ENCODE measurements at regions of chr14 and their contacts with region 1.

Region 1: DNA sequence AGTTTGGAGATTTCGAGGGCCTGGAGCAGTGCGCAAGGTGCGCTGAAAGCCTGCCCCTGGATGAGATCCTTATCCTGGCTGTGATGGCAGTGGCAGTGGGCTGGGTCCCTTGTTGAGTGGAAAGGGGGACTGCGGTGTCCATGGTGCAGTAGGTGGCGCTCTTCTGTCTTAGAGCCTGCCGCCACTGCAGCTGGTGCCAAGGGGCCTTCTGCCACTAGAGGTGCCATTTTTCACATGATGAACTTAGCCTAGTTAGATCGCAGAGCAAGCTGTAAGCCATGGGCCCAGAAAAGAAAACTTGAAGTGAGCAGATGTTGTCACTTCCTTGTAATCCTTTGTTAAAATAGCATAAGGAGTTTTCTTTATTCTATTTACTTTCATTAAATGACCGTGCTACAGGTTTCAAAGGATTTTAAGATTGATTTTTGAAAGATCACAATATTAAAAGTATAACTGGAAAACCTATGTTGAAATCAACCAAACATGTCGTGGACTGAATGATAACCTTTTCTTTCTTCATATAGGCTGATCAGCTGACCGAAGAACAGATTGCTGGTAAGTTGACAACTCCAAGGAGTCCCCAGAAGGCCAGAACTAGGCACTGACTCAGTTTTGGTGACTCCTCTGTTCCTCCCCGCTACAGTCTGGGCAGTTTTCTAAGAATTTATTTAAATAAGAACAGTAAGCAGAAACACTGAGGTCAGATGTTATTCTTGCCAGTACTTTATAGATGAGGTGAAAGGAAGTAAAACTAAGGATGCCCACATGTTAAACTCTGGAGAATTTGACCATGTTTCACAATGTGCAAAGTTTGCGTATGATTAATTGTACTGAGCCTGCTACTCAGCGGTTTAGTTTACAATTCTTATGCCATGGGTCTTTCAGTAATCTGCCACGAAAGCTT is 3.0 kb downstream of the CALM1 start:
- DNase-seq: peak; percentile 71
- H3K4me3 ChIP-seq: peak overlapping the region; percentile 85 to 94 (median 88)
- H3K27ac ChIP-seq: peak overlapping the region; percentile 95 to 99 (median 96)
- H3K4me1 ChIP-seq: peaks cover 10 to 70% (median 41%) of the 10 kb centered on the region in 3 donors
- H3K27me3 ChIP-seq: no peaks in the 10 kb centered on the region
- CTCF ChIP-seq: peak; percentile 97 to 100 (median 99)
- POLR2A ChIP-seq: no peak

Region 2: DNA sequence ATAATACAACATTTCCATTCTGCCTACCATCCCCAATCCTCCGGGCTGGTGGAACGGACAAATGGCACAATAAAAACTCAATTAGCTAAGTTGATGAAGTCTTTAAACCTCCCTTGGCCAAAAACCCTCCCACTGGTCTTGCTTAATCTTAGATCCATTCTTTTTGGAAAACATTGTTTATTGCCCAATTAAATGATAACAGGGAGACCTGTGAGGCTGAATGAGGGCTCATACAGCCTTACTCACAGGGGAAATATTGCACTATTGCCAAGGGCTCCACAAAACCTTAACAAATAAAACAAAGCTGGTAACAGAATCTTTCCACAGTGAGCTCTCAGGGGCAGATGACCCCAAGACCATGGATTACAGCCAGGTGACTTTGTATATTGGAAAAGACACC is 151.2 kb before region 1 on chr14:
- intact Hi-C with region 1: no loop called
- DNase-seq: no peak
- H3K4me3 ChIP-seq: no peak overlapping the region
- H3K27ac ChIP-seq: no peak overlapping the region
- H3K4me1 ChIP-seq: no peaks in the 10 kb centered on the region
- H3K27me3 ChIP-seq: peaks cover 0 to 17% (median 0%) of the 10 kb centered on the region in 4 donors
- CTCF ChIP-seq: no peak
- POLR2A ChIP-seq: no peak

Region 3: DNA sequence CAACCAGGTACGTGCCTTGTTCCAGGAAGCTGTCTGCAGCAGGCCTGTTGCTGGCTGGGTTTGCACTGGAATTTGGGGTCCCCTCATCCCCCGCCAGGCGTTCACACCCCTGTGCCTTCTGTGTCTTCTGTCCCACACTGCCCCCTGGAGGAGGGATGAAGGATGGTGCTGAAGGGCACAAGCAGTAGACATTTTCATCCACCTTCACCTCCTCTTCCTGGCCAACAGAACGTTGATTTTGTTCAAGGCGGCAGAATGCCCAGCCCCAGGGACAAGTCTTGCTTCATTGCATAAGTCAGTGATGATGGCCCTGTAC is 119.1 kb after region 1 on chr14:
- intact Hi-C with region 1: loop called (anchors 10 kb)
- DNase-seq: no peak
- H3K4me3 ChIP-seq: no peak overlapping the region
- H3K27ac ChIP-seq: peak overlapping the region in 2 of 4 donors; percentile 61 to 62
- H3K4me1 ChIP-seq: peaks cover 45 to 95% (median 47%) of the 10 kb centered on the region in 3 donors
- H3K27me3 ChIP-seq: no peaks in the 10 kb centered on the region
- CTCF ChIP-seq: peak in 5 of 6 experiments; percentile 38 to 68 (median 46)
- POLR2A ChIP-seq: no peak

Region 4: GRCh38 chr14:90697577-90698206 is 297.9 kb after region 1 on chr14:
- intact Hi-C with region 1: loop called (anchors 2 kb)
- DNase-seq: peak; percentile 11
- H3K4me3 ChIP-seq: no peak overlapping the region
- H3K27ac ChIP-seq: peak overlapping the region in 3 of 4 donors; percentile 63 to 79 (median 75)
- H3K4me1 ChIP-seq: peaks cover 0 to 38% (median 11%) of the 10 kb centered on the region in 3 donors
- H3K27me3 ChIP-seq: no peaks in the 10 kb centered on the region
- CTCF ChIP-seq: peak; percentile 70 to 97 (median 96)
- POLR2A ChIP-seq: no peak